ENCODE measurements at regions of chr5 and their contacts with region 1.

Region 1: DNA sequence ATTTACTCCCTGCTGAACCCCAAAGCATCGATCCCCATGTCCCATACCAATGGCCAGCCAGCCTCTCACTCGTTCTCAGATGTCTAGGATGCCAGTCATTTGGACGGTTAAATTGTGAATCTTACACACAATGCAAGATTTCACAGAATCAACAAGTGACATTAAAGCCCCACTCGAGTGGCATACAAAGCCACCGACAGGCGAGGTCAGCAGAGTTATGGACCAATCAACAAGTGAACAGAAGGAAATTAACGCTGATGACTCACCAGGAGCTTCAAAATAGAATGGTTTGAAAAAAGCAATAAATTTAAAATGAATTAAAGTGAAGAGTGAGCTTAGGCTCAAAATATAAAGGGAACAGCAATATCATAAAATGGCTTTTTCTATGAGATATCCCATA is 8.2 kb upstream of the RUFY1 start:
- DNase-seq: no peak
- ATAC-seq: no peak
- H3K4me3 Mint-ChIP-seq: no peak overlapping the region
- H3K27ac Mint-ChIP-seq: peak overlapping the region; percentile 54
- H3K4me1 Mint-ChIP-seq: peaks cover 47% of the 10 kb centered on the region
- H3K27me3 Mint-ChIP-seq: no peaks in the 10 kb centered on the region
- CTCF ChIP-seq: no peak

Region 2: DNA sequence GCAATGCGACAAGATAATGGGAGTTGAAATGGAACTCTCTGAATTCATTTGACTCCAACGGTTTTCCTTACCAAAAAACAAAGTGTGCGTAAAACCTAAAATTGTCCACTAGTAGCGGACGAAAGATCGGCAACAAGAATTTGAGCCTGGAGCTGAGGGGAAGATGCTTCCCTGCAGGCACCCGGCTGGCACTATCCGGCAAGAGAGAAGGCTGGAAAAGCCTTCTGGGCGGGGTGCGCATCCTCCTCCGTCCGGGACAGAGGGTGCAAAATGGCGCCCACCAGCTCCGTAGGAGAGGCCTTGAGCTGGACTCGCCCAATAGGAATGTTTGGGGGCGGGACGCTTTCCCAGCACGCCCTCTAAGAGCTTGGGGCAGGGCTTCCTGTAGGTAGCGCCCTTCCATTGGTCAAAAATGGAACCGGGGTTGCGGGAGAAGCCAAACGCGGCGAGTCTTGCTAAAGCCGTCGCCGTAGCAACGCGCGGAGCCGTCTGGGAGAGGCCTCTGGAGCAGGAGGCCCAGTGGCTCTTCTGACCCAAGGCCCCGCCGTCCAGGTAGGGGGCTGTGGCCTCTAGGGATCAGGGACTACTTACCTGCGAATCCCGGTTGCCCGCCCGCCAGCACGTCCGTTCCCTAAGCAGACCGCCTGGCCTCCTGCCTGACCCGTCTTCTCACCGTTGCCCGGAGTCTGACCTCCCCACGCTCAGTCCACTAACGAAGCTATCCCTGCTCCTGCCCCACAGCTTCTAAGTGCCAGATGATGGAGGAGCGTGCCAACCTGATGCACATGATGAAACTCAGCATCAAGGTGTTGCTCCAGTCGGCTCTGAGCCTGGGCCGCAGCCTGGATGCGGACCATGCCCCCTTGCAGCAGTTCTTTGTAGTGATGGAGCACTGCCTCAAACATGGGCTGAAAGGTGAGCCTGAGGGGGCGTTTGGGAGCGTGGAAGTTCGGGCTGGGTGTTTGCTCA is 17.4 kb after region 1 on chr5:
- CTCF ChIA-PET with region 1: no interaction called
- POLR2A ChIA-PET with region 1: interaction called, 14 read pairs
- intact Hi-C with region 1: loop called (anchors 1 kb)
- DNase-seq: peak; percentile 64
- ATAC-seq: peak; percentile 100
- H3K4me3 Mint-ChIP-seq: peak overlapping the region; percentile 86
- H3K27ac Mint-ChIP-seq: peak overlapping the region; percentile 84
- H3K4me1 Mint-ChIP-seq: peaks cover 17% of the 10 kb centered on the region
- H3K27me3 Mint-ChIP-seq: no peaks in the 10 kb centered on the region
- CTCF ChIP-seq: no peak

Measured in activated B cell treated with CpG ODN at 0.5 μM for 24 hours (primary cell).